Prostate gland (tissue), 2 donors: ENCODE measurements at regions of chr1 and their contacts with region 1.

Region 1: GRCh38 chr1:55375617-55376258 is 160.6 kb upstream of the USP24 start:
- DNase-seq: peak; percentile 13
- H3K4me3 ChIP-seq: no peak overlapping the region
- H3K27ac ChIP-seq: peak overlapping the region; percentile 14 to 58
- H3K4me1 ChIP-seq: no peaks in the 10 kb centered on the region
- H3K27me3 ChIP-seq: no peaks in the 10 kb centered on the region
- CTCF ChIP-seq: peak; percentile 62 to 82 (median 75)
- POLR2A ChIP-seq: no peak

Region 2: GRCh38 chr1:55584526-55585401 is 209.0 kb after region 1 on chr1:
- intact Hi-C with region 1: loop called (anchors 5 kb)
- DNase-seq: no peak
- H3K4me3 ChIP-seq: no peak overlapping the region
- H3K27ac ChIP-seq: peak overlapping the region; percentile 4 to 34
- H3K4me1 ChIP-seq: no peaks in the 10 kb centered on the region
- H3K27me3 ChIP-seq: no peaks in the 10 kb centered on the region
- CTCF ChIP-seq: no peak
- POLR2A ChIP-seq: no peak

Region 3: DNA sequence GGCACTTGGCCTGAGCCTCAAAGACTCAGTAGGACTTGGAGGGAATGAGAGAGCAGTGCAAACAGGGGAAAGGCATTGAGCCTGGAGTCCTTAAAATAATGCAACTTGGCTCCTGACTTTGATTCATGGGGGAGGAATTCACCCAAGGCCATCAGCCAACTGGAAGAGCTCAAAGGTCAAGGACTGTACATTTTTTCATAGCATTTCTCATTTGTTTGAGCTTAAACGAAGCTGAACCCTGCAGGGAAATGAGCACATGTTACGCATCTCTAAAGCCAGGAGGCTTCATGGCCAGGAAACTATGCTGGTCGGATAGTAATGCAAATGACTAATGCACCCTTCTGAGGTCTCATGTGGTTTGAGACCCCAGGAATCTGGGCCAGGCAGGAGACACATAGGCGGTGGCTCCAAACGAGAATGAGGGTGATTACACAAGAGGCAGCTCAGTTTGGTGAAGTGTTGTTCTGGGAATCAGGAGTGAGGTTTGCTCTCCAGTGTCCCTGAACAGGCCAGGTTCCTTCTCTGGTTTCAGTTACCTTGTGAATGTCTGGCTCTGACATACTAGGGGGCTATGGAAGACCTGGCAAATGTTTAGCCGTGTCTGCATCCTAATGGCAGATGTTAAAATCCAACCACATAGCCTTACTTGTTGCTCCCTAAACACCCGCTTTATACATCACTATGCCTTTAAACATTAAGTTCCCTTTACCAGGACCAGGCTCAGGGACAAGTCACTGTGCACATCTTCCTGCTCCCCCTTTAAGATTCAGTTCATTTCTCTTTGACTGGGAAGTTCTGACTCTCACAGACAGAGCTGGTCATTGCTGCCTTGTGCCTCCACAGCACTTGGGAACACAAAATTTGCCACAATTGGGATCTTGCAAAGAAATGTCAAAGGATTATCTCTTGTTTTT is 343.3 kb after region 1 on chr1:
- intact Hi-C with region 1: loop called (anchors 5 kb)
- DNase-seq: no peak
- H3K4me3 ChIP-seq: no peak overlapping the region
- H3K27ac ChIP-seq: peak overlapping the region; percentile 18 to 53
- H3K4me1 ChIP-seq: no peaks in the 10 kb centered on the region
- H3K27me3 ChIP-seq: no peaks in the 10 kb centered on the region
- CTCF ChIP-seq: no peak
- POLR2A ChIP-seq: no peak

Region 4: DNA sequence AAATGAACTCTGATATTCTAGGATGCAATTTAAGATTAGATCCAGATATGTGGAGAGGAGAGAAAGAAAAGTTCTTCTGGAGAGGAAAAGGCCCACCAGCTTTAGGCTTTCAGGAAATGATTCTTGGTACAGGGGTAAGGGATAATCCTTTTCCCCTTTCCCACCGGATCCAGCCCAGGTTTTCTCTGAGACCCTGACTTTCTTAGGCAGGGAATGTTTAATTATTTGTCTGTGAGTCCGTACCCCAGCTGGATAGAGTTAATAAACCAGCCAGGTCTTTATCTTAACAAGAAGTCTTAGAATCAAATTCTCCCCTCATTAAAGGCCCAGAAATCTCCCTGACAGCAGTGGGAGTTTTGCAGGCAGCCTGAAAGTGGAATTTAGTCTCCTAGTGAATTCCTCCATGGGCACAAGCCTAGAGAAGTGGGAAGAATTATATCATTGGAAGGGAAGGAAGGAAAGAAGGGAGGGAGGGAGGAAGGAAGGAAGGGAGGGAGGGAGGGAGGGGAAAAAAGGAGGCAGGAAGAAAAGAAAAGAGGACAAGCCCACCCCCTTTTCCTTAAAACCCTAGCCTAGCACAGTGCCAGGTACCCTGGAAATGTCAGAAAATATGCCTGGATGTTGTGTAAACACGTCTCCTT is 1014.6 kb after region 1 on chr1:
- intact Hi-C with region 1: loop called (anchors 10 kb)
- DNase-seq: no peak
- H3K4me3 ChIP-seq: no peak overlapping the region
- H3K27ac ChIP-seq: no peak overlapping the region
- H3K4me1 ChIP-seq: no peaks in the 10 kb centered on the region
- H3K27me3 ChIP-seq: no peaks in the 10 kb centered on the region
- CTCF ChIP-seq: no peak
- POLR2A ChIP-seq: no peak